CD4-positive, alpha-beta memory T cell (primary cell): ENCODE measurements at regions of chr7 and their contacts with region 1.

Region 1: DNA sequence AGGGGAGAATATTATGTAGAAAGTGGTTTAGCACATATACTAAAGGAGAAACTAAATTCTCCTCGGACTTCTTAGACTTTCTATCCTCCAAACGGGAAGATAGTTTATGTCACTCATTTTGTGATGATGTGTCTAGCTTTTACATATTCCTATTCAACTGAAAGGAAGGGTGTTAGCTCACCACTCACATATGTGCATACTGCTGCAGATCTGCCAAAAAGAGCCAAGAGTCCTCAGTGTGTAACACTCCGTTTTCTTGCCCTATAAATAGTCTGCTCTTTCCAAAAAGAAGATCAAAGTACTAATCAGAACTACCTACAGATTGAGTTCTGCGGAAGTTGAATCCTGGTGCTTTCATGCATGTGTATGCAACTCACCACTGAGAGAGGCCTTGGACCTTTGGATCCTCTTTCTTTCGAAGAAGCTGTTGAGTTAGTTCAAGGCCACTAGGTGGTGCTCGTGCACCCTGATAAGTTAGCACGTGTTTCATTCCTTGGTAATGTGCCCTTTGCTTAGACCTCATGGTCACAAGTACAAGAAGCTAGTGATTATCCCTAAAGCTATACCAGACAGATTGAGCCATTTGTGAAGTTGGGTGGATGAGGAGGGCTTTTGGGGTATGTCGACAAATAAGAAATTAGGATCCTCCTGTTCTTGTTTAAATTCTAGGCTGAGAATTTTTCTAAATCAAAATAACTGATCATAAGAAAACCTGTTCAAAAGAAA is 14.1 kb downstream of the YAE1 start:
- DNase-seq: peak; percentile 69 to 78 (median 73)
- H3K4me3 ChIP-seq: no peak overlapping the region
- H3K4me3 Mint-ChIP-seq: no peak overlapping the region
- H3K27ac ChIP-seq: no peak overlapping the region
- H3K27ac Mint-ChIP-seq: peak overlapping the region in 6 of 7 donors; percentile 3 to 67 (median 31)
- H3K4me1 ChIP-seq: no peaks in the 10 kb centered on the region
- H3K4me1 Mint-ChIP-seq: peaks cover 0 to 6% (median 6%) of the 10 kb centered on the region in 4 donors
- H3K27me3 ChIP-seq: no peaks in the 10 kb centered on the region
- H3K27me3 Mint-ChIP-seq: no peaks in the 10 kb centered on the region

Region 2: DNA sequence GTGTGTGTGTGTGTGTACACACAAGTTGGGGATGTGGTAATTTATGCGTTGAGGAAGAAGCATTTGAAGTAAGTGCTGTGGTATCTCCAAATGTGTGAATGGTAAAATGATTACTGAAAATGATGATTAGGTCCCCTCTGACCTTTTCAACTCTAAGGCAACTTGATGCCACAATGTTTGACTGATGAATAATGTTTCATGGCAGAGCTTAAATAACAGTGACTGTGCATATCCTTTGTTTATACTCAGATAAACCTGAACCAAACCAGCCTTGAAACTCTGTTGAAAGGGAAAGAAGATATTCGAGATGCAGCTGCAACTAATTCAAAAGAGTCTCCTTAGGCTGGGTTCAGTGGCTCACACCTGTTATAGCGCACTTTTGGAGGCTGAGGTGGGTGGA is 79.0 kb before region 1 on chr7:
- CTCF ChIA-PET with region 1: no interaction called
- POLR2A ChIA-PET with region 1: no interaction called
- intact Hi-C with region 1: no loop called
- DNase-seq: no peak
- H3K4me3 ChIP-seq: no peak overlapping the region
- H3K4me3 Mint-ChIP-seq: no peak overlapping the region
- H3K27ac ChIP-seq: no peak overlapping the region
- H3K27ac Mint-ChIP-seq: no peak overlapping the region
- H3K4me1 ChIP-seq: no peaks in the 10 kb centered on the region
- H3K4me1 Mint-ChIP-seq: peaks cover 0 to 2% (median under 1%) of the 10 kb centered on the region in 4 donors
- H3K27me3 ChIP-seq: no peaks in the 10 kb centered on the region
- H3K27me3 Mint-ChIP-seq: peaks cover 12 to 20% of the 10 kb centered on the region in 2 donors

Region 3: DNA sequence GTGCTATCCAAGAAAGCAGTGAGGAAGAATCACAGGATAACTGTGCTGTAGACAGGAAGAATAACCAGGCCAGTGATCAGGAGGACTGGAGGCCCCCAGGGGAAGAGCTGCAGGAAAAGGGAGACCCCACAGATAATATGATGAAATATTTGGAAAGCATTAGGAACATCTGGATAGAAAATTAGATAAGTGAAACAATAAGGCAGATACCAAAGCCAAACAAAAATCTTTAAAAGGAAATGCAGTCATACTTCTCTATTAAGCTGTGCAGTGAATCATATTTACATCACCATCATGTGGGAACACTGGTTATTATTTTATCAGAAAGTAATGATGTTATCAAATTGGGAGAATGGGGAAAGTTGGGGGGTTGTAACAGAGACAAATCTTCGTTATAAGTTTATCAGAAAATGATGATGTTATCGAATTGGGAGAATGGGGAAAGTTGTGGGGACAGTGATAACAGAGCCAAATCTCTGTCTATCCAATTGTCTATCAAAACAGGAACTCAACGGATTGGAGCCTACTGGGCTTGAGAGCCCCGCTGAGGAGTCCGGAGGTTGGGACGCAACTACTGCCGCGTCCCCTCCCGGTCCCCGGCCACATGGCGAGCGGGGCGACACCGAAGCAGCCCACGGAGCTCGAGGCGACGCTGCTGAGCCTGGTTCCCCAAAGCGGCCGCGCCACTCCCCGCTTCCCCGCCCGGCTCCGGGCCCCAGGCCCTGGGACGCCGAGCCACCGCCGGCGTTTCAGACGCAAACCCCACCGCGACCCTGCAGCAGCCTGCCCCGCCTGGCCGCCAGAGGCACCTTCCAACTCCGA is 29.0 kb after region 1 on chr7:
- CTCF ChIA-PET with region 1: interaction called, 24 read pairs
- POLR2A ChIA-PET with region 1: interaction called, 4 read pairs
- intact Hi-C with region 1: loop called (anchors 2 kb)
- DNase-seq: no peak
- H3K4me3 ChIP-seq: no peak overlapping the region
- H3K4me3 Mint-ChIP-seq: peak overlapping the region; percentile 36 to 71 (median 61)
- H3K27ac ChIP-seq: no peak overlapping the region
- H3K27ac Mint-ChIP-seq: peak overlapping the region in 6 of 7 donors; percentile 11 to 77 (median 34)
- H3K4me1 ChIP-seq: peaks cover 44% of the 10 kb centered on the region
- H3K4me1 Mint-ChIP-seq: peaks cover 26 to 51% (median 35%) of the 10 kb centered on the region in 4 donors
- H3K27me3 ChIP-seq: no peaks in the 10 kb centered on the region
- H3K27me3 Mint-ChIP-seq: peaks cover 16 to 25% of the 10 kb centered on the region in 2 donors

Region 4: GRCh38 chr7:39623018-39623731 is 42.9 kb after region 1 on chr7 and contains the start of gene RALA:
- CTCF ChIA-PET with region 1: interaction called, 65 read pairs
- POLR2A ChIA-PET with region 1: interaction called, 21 read pairs
- intact Hi-C with region 1: loop called (anchors 1 kb)
- DNase-seq: peak; percentile 85 to 92 (median 87)
- H3K4me3 ChIP-seq: peak within 1 kb of the TSS; percentile 66 to 78
- H3K4me3 Mint-ChIP-seq: peak within 1 kb of the TSS; percentile 90 to 99 (median 97)
- H3K27ac ChIP-seq: peak within 1 kb of the TSS; percentile 79
- H3K27ac Mint-ChIP-seq: peak within 1 kb of the TSS; percentile 90 to 98 (median 95)
- H3K4me1 ChIP-seq: peaks cover 52% of the 10 kb centered on the region
- H3K4me1 Mint-ChIP-seq: peaks cover 36 to 63% (median 45%) of the 10 kb centered on the region in 4 donors
- H3K27me3 ChIP-seq: no peaks in the 10 kb centered on the region
- H3K27me3 Mint-ChIP-seq: no peaks in the 10 kb centered on the region
- total RNA-seq, gene RALA: 46.3 to 47.7 TPM

Region 5: DNA sequence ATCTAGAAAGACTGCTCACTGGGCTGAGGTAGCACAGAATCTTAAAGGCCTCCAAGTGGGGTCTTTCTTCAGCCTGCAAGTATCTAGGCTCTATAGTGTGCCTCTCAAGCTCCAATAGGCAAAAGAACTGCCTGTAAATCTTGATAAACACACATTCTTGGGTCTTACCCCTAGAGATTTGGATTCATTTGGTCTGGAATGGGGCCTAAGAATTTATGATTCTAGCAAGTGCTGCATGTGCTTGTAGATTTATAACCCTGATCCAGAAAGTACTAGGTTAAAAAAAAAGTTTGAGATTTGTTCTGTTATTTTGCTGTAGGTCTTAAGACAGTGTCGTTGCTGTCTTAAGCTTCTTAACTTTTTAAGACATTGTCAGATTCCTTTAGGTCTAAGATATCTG is 117.2 kb after region 1 on chr7:
- CTCF ChIA-PET with region 1: interaction called, 14 read pairs
- POLR2A ChIA-PET with region 1: no interaction called
- intact Hi-C with region 1: no loop called
- DNase-seq: no peak
- H3K4me3 ChIP-seq: no peak overlapping the region
- H3K4me3 Mint-ChIP-seq: no peak overlapping the region
- H3K27ac ChIP-seq: no peak overlapping the region
- H3K27ac Mint-ChIP-seq: peak overlapping the region in 4 of 7 donors; percentile 0 to 70 (median 36)
- H3K4me1 ChIP-seq: no peaks in the 10 kb centered on the region
- H3K4me1 Mint-ChIP-seq: peaks cover 0 to 2% (median under 1%) of the 10 kb centered on the region in 4 donors
- H3K27me3 ChIP-seq: no peaks in the 10 kb centered on the region
- H3K27me3 Mint-ChIP-seq: no peaks in the 10 kb centered on the region

Region 6: GRCh38 chr7:39746103-39746819 is 165.9 kb after region 1 on chr7:
- CTCF ChIA-PET with region 1: interaction called, 748 read pairs
- POLR2A ChIA-PET with region 1: interaction called, 34 read pairs
- intact Hi-C with region 1: loop called (anchors 1 kb)
- DNase-seq: peak; percentile 42 to 55 (median 52)
- H3K4me3 ChIP-seq: no peak overlapping the region
- H3K4me3 Mint-ChIP-seq: peak overlapping the region in 2 of 8 donors; percentile 15 to 20
- H3K27ac ChIP-seq: no peak overlapping the region
- H3K27ac Mint-ChIP-seq: peak overlapping the region in 4 of 7 donors; percentile 20 to 81 (median 54)
- H3K4me1 ChIP-seq: peaks cover 3% of the 10 kb centered on the region
- H3K4me1 Mint-ChIP-seq: peaks cover 5 to 6% (median 5%) of the 10 kb centered on the region in 4 donors
- H3K27me3 ChIP-seq: no peaks in the 10 kb centered on the region
- H3K27me3 Mint-ChIP-seq: no peaks in the 10 kb centered on the region

Region 7: GRCh38 chr7:39948956-39949928 is 368.9 kb after region 1 on chr7:
- CTCF ChIA-PET with region 1: interaction called, 3 read pairs
- POLR2A ChIA-PET with region 1: interaction called, 4 read pairs
- intact Hi-C with region 1: loop called (anchors 5 kb)
- DNase-seq: peak; percentile 98 to 100 (median 99)
- H3K4me3 ChIP-seq: peak overlapping the region; percentile 67 to 73
- H3K4me3 Mint-ChIP-seq: peak overlapping the region; percentile 96 to 99 (median 98)
- H3K27ac ChIP-seq: peak overlapping the region; percentile 94
- H3K27ac Mint-ChIP-seq: peak overlapping the region; percentile 99 to 100 (median 100)
- H3K4me1 ChIP-seq: peaks cover 32% of the 10 kb centered on the region
- H3K4me1 Mint-ChIP-seq: peaks cover 21 to 47% (median 31%) of the 10 kb centered on the region in 4 donors
- H3K27me3 ChIP-seq: no peaks in the 10 kb centered on the region
- H3K27me3 Mint-ChIP-seq: peaks cover 0 to 5% of the 10 kb centered on the region in 2 donors